Right ventricle myocardium inferior (tissue), 1 donor: ENCODE measurements at regions of chr9 and their contacts with region 1.

Region 1: DNA sequence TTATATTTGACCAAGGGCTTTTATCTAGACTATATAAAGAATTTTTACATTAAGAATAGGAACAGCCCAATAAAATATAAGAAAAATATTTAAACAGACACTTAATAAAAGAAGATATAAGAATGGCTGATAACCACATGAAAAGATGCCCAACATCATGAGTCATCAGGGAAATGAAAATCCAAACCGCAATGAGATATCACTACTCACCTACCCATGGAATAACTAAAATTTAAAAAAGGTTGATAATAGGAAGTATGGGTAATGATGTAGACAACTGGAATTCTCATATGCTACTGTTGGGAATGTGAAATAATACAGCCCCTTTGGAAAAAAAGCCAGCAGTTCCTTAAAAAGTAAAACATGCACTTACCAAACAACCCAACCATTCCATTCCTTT is 206.9 kb upstream of the PCSK5 start:
- DNase-seq: no peak
- ATAC-seq: no peak

Region 2: DNA sequence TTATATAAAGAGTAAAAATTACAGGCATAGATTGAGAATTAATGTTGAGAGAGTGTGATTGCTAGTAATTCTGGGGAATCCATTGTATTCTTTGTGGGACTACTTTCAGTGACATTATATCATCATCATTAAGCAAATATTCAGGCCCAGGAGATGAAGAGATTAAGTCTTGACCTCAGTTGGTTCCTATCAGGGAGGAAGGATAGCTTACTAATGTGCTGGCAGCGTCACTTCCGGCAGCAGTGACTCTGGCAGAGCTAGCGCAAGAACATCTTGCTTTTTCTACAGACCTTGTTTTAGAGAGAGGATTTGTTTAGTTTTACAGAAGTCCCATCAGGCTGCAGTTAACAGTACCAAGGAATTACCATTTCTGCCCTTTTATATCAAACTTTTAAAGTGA is 575.0 kb before region 1 on chr9:
- intact Hi-C with region 1: no loop called
- DNase-seq: peak; percentile 84
- ATAC-seq: peak; percentile 65

Region 3: GRCh38 chr9:77177161-77177893 is 1493.7 kb after region 1 on chr9 and contains the start of gene VPS13A:
- intact Hi-C with region 1: loop called (anchors 10 kb)
- DNase-seq: peak; percentile 95
- ATAC-seq: peak; percentile 97
- total RNA-seq, gene VPS13A: 36.2 TPM